Activated CD8-positive, alpha-beta T cell treated with anti-CD3 and anti-CD28 coated beads for 36 hours (primary cell): ENCODE measurements at regions of chrX and their contacts with region 1.

Region 1: DNA sequence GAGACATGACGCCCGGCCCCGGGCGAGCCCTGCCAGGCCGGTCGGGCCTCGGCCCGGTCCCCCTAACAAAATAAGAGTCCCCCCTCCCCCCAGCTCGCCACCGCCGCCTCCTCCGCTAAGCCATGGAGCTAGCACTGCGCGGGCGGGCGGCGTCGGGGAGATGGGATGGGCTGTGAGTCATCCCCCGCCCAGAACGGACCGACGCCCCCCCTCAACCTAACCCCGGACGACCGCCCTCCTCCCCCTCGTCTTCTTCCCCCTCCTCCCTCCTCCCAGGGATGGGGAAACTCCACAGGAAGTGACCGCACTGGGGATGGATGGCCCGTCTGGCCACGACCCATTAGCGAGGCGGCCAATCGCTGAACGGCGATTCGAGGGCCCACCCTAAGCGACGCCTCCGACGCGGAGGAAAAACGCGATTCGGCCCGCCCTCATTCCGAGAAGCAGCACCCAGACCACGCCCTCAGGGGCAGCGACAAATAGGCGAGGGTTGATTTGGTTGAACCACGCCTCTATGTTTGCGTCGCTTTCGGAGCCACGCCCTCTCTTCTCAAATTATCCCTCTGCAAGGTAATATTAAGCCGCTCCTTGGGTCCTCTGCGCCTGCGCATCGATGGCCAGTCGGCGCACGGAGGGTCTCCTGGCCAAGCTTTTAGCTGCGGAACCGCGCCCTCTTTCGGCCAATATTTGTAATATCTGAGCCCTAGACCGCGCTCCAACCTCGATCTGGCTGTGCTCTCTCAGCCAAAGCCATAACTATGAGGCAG is at the start of gene TFE3:
- DNase-seq: peak; percentile 99
- ATAC-seq: peak; percentile 92
- H3K4me3 Mint-ChIP-seq: peak within 1 kb of the TSS; percentile 94
- H3K27ac Mint-ChIP-seq: peak within 1 kb of the TSS; percentile 95
- H3K4me1 Mint-ChIP-seq: peaks cover 31% of the 10 kb centered on the region
- H3K27me3 Mint-ChIP-seq: no peaks in the 10 kb centered on the region
- CTCF ChIP-seq: peak; percentile 33
- total RNA-seq, gene TFE3: 17.9 to 19.5 TPM

Region 2: GRCh38 chrX:48948589-48948988 is 94.8 kb before region 1 on chrX:
- CTCF ChIA-PET with region 1: no interaction called
- POLR2A ChIA-PET with region 1: no interaction called
- intact Hi-C with region 1: no loop called
- DNase-seq: no peak
- ATAC-seq: no peak
- H3K4me3 Mint-ChIP-seq: no peak overlapping the region
- H3K27ac Mint-ChIP-seq: peak overlapping the region; percentile 46
- H3K4me1 Mint-ChIP-seq: peaks cover 45% of the 10 kb centered on the region
- H3K27me3 Mint-ChIP-seq: no peaks in the 10 kb centered on the region
- CTCF ChIP-seq: no peak

Region 3: GRCh38 chrX:48972220-48973167 is 70.9 kb before region 1 on chrX:
- CTCF ChIA-PET with region 1: interaction called, 7 read pairs
- POLR2A ChIA-PET with region 1: interaction called, 3 read pairs
- intact Hi-C with region 1: loop called (anchors 5 kb)
- DNase-seq: peak; percentile 52
- ATAC-seq: peak; percentile 51
- H3K4me3 Mint-ChIP-seq: peak overlapping the region; percentile 33
- H3K27ac Mint-ChIP-seq: no peak overlapping the region
- H3K4me1 Mint-ChIP-seq: peaks cover 18% of the 10 kb centered on the region
- H3K27me3 Mint-ChIP-seq: no peaks in the 10 kb centered on the region
- CTCF ChIP-seq: no peak